BJ (cell line): ENCODE measurements at regions of chr15 and their contacts with region 1.

Region 1: GRCh38 chr15:34708422-34708821 is 46.4 kb downstream of the GJD2 start:
- DNase-seq: no peak
- H3K4me3 ChIP-seq: no peak overlapping the region
- H3K27me3 ChIP-seq: no peaks in the 10 kb centered on the region; the same call in 1 of the 2 replicates
- CTCF ChIP-seq: peak; percentile 94

Region 2: DNA sequence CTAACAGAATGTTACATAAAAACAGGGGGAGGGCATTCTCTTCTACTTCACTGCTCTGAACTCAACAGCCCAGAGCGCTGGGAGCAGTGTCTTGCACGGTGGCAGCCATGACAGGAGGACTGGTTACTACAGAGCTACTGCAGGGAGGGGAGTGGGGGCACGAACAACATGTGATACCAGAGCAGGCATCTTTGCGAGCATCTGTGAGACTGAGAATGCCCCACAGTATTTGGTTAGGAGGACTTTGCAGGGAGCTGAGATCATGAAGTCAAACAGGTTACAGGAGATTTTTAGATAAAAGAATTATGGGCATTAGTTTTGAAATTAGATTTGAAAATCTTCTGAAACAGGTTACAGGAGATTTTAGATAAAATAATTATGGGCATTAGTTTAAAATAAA is 66.2 kb before region 1 on chr15:
- CTCF ChIA-PET with region 1: no interaction called
- POLR2A ChIA-PET with region 1: no interaction called
- DNase-seq: no peak
- H3K4me3 ChIP-seq: no peak overlapping the region
- H3K27me3 ChIP-seq: no peaks in the 10 kb centered on the region
- CTCF ChIP-seq: no peak

Region 3: DNA sequence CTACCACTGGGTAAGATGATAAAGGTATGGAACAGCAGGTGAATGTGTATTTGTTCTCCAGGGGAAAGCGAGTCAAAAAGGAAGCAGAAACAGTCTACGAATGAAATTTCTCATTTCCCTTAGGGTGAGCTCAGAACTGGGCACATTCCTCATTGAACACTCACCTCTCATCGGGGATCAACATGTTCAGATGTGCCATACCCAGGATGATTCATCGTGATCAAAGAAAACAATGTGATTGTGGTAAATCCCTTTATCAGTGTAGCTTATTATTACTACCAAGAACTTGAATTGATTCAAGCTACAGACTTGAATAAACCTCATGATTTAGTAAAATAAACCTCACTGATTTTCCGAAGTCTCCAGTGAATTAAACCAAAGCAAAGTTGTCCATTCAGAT is 25.7 kb before region 1 on chr15:
- CTCF ChIA-PET with region 1: interaction called, 3 read pairs
- POLR2A ChIA-PET with region 1: interaction called, 14 read pairs
- DNase-seq: no peak
- H3K4me3 ChIP-seq: no peak overlapping the region
- H3K27me3 ChIP-seq: 0 out of 2 replicates have a peak, but pooled peaks cover 1% of the 10 kb centered on the region
- CTCF ChIP-seq: no peak

Region 4: DNA sequence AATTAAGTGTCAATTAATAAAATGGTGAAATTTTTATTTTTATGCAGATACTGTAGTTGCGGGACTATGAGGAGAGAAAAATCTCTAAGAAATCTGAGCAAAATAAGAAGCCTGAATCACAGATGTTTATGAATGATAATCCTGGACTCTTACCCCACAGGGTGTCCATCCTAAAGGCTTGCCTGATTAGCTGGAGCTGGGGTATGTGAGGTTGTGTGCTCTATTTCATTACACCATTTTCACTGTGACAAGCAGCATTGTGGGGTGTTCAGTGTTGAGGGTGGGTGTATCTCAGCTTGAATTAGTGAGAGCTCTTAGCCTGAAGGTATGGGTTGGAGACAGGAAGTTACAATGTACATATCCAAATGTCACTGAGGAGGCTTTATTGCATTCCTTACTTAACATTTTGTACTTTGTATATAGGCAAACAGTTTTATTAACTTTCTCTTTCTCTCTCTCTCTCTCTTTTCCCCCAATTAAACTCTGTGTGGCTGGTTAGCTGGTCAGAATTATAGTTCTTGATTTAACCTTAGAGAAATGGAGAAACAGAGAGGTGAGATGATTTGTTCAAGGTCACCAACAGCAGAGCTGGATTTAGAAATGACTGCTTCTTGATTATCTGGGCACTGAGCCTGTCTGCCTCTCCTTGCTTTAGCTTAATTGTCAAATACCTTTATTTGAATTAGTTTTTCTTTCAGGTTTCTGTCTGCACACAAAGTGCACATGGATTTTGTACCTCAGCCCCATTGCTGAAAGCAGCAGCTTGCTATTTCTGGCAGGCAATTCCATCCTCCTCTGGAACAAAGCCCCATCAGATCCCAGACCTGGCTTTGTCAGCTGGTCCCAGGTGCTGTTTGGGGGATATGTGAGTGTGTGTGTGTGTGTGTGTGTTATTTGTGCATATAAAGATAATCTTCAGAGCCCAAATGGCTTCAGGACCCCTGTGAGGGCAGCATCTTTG is 10.5 kb after region 1 on chr15:
- CTCF ChIA-PET with region 1: interaction called, 33 read pairs
- POLR2A ChIA-PET with region 1: no interaction called
- DNase-seq: no peak
- H3K4me3 ChIP-seq: no peak overlapping the region
- H3K27me3 ChIP-seq: peaks cover 2% of the 10 kb centered on the region; the same call in 1 of the 2 replicates
- CTCF ChIP-seq: no peak

Region 5: GRCh38 chr15:34737477-34737876 is 29.1 kb after region 1 on chr15:
- CTCF ChIA-PET with region 1: no interaction called
- POLR2A ChIA-PET with region 1: no interaction called
- DNase-seq: no peak
- H3K4me3 ChIP-seq: no peak overlapping the region
- H3K27me3 ChIP-seq: peaks cover 3% of the 10 kb centered on the region
- CTCF ChIP-seq: no peak

Region 6: DNA sequence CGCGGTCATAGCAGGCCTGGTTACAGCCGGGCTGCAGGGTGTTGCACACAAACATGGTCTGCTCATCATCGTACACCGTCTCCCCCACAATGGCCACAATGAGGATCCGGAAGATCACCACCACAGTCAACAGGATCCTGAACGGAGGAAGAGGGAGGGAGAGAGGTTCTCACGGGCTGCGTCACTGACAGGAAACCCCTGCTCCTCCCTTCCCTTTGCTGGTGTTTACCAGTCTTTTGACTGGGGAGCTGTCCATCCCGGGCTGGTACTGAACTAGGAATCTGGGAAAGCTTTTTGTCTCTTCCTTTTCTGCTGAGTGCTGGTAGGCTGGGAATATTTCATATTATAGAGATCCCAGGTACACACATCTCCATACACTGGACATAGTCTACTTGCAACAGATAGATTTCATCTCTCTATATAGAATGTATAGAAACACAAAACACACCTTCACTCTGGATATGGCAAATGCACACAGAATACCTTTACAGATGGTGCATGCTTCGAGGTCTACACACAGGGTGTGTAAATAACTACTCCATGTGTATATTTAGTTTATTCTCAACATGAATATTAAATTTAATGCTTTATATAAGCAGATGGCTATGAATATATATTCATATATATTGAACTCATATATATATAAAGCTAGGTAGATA is 44.9 kb after region 1 on chr15:
- CTCF ChIA-PET with region 1: no interaction called
- POLR2A ChIA-PET with region 1: no interaction called
- DNase-seq: no peak
- H3K4me3 ChIP-seq: no peak overlapping the region
- H3K27me3 ChIP-seq: peaks cover 22% of the 10 kb centered on the region
- CTCF ChIP-seq: no peak

Region 7: DNA sequence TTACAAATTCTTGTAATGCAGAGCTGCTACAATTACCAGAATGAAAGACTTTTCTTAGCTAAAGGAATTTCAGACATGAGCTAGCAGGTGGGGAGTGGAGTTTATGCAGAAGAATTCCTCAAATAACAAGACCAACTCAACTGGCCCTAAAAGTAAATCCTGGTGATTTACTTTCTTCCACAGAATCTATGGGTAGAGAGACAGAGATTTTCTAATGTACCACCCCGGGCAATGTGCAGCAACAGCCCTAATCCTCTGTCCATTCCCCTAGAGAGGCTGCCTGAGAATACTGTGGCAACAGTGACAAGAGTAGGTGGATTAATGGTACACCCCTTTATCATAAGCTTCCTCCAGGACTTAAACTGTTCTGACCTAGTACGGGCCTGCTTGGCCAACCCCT is 205.9 kb after region 1 on chr15:
- CTCF ChIA-PET with region 1: interaction called, 23 read pairs
- POLR2A ChIA-PET with region 1: no interaction called
- DNase-seq: no peak
- H3K4me3 ChIP-seq: no peak overlapping the region
- H3K27me3 ChIP-seq: no peaks in the 10 kb centered on the region
- CTCF ChIP-seq: no peak

Region 8: GRCh38 chr15:34927726-34928125 is 219.3 kb after region 1 on chr15:
- CTCF ChIA-PET with region 1: interaction called, 12 read pairs
- POLR2A ChIA-PET with region 1: no interaction called
- DNase-seq: no peak
- H3K4me3 ChIP-seq: no peak overlapping the region
- H3K27me3 ChIP-seq: no peaks in the 10 kb centered on the region
- CTCF ChIP-seq: no peak

Region 9: DNA sequence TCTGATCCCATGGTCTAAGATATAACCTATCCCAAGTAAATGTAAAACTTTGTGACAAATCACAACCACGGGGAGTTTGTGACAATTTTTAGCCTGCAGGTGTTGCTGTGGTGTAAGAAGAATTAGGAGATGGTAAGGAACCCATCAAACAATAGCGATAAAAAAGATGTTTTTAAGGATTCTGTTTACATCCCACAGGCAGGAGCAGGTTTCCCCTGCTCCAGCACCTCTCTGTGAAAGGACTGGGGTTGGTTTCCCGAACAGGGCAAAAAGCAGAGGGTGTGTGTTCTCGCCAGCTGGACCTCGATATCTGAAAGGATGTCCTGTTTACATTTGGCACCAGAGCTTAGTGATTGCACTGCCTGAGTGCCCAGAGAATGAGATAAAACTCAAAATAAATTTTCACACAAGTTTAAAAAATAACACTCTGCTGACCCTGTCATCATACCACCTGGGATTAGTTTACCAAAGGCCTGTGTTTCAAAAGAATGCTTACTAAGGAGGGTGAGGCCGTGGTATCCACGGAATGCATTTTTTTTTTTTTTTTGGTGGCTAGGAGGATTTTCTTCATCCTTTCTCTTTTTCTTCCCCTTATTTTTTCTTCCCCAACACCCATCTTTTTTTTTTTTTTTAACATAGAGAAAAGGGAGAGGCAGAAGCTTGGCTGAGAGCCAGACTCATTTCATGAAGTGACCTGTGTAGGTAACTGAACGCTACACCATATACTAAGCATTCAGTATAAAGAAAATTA is 989.3 kb after region 1 on chr15:
- CTCF ChIA-PET with region 1: no interaction called
- POLR2A ChIA-PET with region 1: no interaction called
- DNase-seq: no peak
- H3K4me3 ChIP-seq: no peak overlapping the region
- H3K27me3 ChIP-seq: no peaks in the 10 kb centered on the region
- CTCF ChIP-seq: no peak